Activated B cell treated with CpG ODN at 0.5 μM for 24 hours (primary cell): ENCODE measurements at regions of chr2 and their contacts with region 1.

Region 1: GRCh38 chr2:230441227-230441897 is 25.4 kb downstream of the SP100 start:
- DNase-seq: no peak
- ATAC-seq: peak; percentile 81
- H3K4me3 Mint-ChIP-seq: peak overlapping the region; percentile 62
- H3K27ac Mint-ChIP-seq: peak overlapping the region; percentile 93
- H3K4me1 Mint-ChIP-seq: peaks cover 80% of the 10 kb centered on the region
- H3K27me3 Mint-ChIP-seq: no peaks in the 10 kb centered on the region
- CTCF ChIP-seq: no peak

Region 2: DNA sequence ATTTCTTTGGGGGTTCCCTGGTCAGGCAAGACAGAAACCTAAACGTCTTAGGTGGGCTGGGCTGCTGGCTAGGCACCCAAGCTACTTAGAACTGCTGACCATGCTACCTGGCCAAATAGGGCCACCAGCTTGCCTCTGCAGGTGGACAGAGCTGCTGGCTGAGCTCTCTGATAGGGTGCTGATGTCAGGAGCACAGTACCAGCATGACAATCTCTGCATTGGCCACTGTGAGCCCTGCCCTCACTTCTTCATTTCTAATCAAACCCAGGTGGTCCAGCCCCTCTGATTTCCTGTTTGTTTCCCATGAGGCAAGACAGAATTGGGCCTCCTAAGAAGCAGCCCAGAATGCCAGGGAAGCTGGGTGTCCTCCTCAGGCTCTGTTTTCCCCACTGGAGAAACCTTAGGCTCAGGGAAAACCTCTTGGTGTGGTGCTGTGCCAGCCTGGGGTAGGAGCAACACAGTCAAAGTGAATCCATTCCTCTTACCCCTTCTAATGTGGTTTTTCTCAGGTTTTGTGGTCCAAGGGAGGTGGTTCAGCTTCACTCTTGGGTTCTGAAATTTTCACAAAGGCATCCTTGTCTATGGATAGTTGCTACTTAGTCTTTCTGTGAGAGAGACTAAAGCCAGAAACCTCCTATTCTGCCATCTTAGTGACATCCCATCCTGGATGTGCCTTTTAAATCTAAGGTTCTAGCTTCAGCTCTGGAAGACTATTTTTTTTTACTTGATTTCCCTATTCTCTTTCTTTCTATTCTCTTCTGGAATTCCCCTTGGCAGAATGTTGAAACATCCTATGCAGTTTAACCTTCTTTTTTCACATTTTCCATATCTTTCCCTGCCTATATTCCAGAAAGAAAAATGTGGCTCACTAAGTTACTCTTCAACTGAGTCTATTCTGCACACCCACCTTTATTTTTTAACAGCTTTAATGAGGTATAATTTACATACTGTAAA is 10.1 kb before region 1 on chr2:
- CTCF ChIA-PET with region 1: no interaction called
- POLR2A ChIA-PET with region 1: no interaction called
- intact Hi-C with region 1: loop called (anchors 1 kb)
- DNase-seq: no peak
- ATAC-seq: peak; percentile 71
- H3K4me3 Mint-ChIP-seq: peak overlapping the region; percentile 17
- H3K27ac Mint-ChIP-seq: peak overlapping the region; percentile 77
- H3K4me1 Mint-ChIP-seq: peaks cover 74% of the 10 kb centered on the region
- H3K27me3 Mint-ChIP-seq: no peaks in the 10 kb centered on the region
- CTCF ChIP-seq: no peak

Region 3: GRCh38 chr2:230457073-230457768 is 15.9 kb after region 1 on chr2:
- CTCF ChIA-PET with region 1: no interaction called
- POLR2A ChIA-PET with region 1: no interaction called
- intact Hi-C with region 1: loop called (anchors 1 kb)
- DNase-seq: no peak
- ATAC-seq: peak; percentile 71
- H3K4me3 Mint-ChIP-seq: peak overlapping the region; percentile 19
- H3K27ac Mint-ChIP-seq: peak overlapping the region; percentile 69
- H3K4me1 Mint-ChIP-seq: peaks cover 78% of the 10 kb centered on the region
- H3K27me3 Mint-ChIP-seq: no peaks in the 10 kb centered on the region
- CTCF ChIP-seq: no peak